MCF 10A (cell line): ENCODE measurements at regions of chr5 and their contacts with region 1.

Region 1: GRCh38 chr5:148125641-148126040 is 42.7 kb upstream of the SPINK14 start:
- DNase-seq: peak; percentile 41
- H3K4me3 Mint-ChIP-seq: no peak overlapping the region
- H3K27ac Mint-ChIP-seq: no peak overlapping the region
- H3K4me1 Mint-ChIP-seq: no peaks in the 10 kb centered on the region
- H3K27me3 Mint-ChIP-seq: no peaks in the 10 kb centered on the region
- CTCF ChIP-seq: peak; percentile 24

Region 2: DNA sequence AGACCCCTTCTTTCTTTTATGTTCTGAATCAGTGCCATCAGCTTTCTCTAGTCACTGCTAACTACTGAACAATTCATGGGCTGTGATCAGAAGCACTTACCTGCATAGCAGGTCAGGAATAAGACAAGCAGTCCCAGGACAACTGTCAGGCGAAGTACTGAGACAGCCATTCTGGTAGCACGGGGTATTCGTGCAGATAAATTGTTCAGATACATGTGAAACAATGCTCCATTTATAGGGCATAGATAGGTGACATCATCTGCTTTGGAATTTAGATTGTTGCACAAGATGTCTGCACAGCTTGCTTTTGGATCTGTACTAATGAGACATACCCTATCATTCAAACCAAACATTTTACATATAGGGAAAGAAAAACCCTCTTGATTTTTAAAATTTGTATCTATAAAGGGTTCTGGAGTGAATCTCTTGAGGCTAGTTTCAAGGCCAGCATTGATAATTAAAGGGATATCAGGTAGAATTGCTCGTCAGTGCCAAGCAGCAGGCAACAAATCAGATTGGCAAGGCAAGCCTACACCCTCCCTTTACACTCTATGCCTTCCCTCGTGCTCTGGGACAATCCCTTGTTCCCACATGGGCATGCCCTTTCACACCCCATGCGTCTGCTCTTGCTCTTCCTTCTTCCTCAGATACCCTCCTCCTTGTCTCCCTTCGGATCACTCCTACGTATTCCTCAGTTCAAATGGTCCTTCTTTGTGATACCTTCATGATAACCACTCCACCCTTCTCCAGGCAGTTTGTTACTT is 219.1 kb before region 1 on chr5 and contains the start of gene C5orf46:
- CTCF ChIA-PET with region 1: no interaction called
- POLR2A ChIA-PET with region 1: no interaction called
- intact Hi-C with region 1: no loop called
- DNase-seq: peak; percentile 75
- H3K4me3 Mint-ChIP-seq: peak within 1 kb of the TSS; percentile 69
- H3K27ac Mint-ChIP-seq: peak within 1 kb of the TSS; percentile 85
- H3K4me1 Mint-ChIP-seq: peaks cover 39% of the 10 kb centered on the region
- H3K27me3 Mint-ChIP-seq: no peaks in the 10 kb centered on the region
- CTCF ChIP-seq: no peak
- total RNA-seq, gene C5orf46: 2.1 and 5.7 TPM in 2 replicates

Region 3: DNA sequence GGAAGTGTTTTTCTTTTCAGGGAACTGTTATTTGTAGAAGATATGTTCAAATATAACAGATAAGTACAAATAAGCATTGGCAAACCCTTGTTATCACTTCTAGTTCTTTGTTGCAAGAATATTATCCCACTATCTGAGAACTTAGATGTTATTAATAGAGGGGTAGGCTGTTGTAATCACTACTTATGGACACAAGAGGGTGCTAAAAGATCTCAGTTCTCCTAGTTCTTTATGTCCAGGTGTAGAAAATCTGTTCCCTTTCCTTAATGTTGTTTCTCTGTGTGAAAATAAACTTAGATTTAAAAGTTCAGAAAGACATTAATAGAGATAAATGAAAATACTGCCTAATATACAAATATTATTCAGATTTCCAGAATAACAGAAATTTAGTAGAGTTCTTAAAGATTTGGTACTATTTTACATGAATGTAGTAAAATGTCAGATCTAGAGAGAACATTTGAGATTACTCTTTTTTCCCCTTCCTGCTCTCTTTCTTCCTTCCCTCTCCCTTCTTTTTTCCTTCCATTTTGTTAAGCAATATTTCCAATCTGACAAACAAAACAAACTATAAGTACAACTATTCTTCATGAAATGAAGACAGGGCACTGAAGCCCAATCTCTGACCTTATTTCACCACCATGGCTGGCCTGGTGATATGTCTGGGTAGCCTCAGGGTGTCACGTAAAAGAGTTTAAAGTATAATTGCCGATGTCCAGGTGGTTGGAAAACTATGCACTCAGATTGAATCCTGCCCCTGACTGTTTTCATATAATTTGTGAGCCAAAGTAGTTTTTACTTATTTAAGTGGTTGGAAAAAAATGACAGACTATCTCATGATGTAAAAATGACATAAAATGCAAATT is 175.7 kb before region 1 on chr5:
- CTCF ChIA-PET with region 1: interaction called, 8 read pairs
- POLR2A ChIA-PET with region 1: no interaction called
- intact Hi-C with region 1: loop called (anchors 1 kb)
- DNase-seq: peak; percentile 73
- H3K4me3 Mint-ChIP-seq: no peak overlapping the region
- H3K27ac Mint-ChIP-seq: peak overlapping the region; percentile 54
- H3K4me1 Mint-ChIP-seq: peaks cover 5% of the 10 kb centered on the region
- H3K27me3 Mint-ChIP-seq: no peaks in the 10 kb centered on the region
- CTCF ChIP-seq: peak; percentile 86